ENCODE measurements at regions of chr16 and their contacts with region 1.

Region 1: DNA sequence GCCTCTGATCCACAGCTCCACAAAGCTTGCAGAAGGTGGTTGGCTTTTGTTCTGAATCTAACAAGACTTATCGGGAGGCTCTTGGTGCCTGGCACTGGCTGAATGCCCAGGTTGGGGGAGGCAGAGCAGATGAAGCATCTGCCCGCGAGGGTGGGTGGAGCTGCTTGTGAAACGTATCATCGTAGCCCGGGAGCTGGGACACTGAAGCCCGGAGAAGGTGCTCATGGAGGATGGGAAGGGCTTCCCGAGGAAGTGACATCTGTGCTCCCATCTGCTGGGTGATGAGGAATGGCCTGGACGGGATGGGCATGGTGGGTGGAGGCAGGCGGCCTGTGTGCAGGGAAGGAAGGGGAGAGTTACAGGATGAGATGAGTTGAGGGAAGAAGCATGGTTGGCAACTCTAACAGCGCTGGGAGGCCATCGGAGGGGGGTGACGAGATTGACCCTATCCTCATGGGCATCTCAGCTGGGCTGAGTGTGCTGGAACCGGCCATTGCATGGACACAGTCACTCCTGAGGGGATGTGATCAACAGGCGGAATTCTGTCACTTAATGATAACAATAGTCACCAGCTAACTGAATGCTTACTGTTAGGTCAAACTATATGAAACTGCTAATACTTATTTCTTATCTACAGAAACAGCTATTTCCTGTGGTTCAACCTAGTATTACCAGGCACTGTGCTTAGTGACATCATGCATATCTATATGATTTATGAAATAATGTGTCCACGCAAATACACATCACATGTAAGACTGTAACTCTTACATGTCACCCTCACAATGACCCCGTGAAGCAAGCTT is 102.7 kb downstream of the ABCC6 start:
- DNase-seq: no peak
- H3K4me3 ChIP-seq: no peak overlapping the region
- H3K27ac ChIP-seq: no peak overlapping the region
- H3K4me1 ChIP-seq: no peaks in the 10 kb centered on the region
- H3K27me3 ChIP-seq: no peaks in the 10 kb centered on the region
- CTCF ChIP-seq: no peak

Region 2: DNA sequence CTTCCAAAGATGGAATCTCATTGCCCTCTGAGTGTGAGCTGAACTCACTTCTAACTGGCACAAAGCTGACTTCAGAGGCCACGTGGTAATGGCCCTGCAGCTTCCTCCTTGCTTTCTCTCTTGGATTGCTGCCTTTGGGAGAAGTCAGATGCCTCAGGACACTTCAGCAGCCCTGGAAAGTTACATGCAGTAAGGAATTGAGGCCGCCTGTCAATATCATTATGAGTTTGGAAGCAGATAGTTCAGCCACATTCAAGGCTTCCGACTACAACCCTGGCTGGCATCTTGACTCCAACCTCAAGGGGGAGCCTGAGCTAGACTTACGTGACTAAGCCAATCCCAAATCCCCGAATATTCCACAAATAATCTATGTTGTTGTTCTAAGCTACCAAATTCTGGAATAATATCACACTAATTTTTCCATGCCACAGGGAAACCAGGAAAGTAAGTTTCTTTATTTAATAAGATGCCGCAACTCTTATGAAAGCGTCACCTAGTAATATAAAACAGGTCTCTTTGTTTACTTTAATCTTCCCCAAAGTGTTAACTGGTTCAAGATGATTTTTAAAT is 245.8 kb before region 1 on chr16:
- CTCF ChIA-PET with region 1: no interaction called
- POLR2A ChIA-PET with region 1: no interaction called
- intact Hi-C with region 1: no loop called
- DNase-seq: peak; percentile 39 to 57
- H3K4me3 ChIP-seq: no peak overlapping the region
- H3K27ac ChIP-seq: peak overlapping the region; percentile 27
- H3K4me1 ChIP-seq: peaks cover 24% of the 10 kb centered on the region
- H3K27me3 ChIP-seq: no peaks in the 10 kb centered on the region
- CTCF ChIP-seq: peak; percentile 81

Region 3: GRCh38 chr16:16057102-16057501 is 63.5 kb before region 1 on chr16:
- CTCF ChIA-PET with region 1: no interaction called
- POLR2A ChIA-PET with region 1: interaction called, 11 read pairs
- intact Hi-C with region 1: no loop called
- DNase-seq: no peak
- H3K4me3 ChIP-seq: no peak overlapping the region
- H3K27ac ChIP-seq: no peak overlapping the region
- H3K4me1 ChIP-seq: no peaks in the 10 kb centered on the region
- H3K27me3 ChIP-seq: no peaks in the 10 kb centered on the region
- CTCF ChIP-seq: no peak

Region 4: DNA sequence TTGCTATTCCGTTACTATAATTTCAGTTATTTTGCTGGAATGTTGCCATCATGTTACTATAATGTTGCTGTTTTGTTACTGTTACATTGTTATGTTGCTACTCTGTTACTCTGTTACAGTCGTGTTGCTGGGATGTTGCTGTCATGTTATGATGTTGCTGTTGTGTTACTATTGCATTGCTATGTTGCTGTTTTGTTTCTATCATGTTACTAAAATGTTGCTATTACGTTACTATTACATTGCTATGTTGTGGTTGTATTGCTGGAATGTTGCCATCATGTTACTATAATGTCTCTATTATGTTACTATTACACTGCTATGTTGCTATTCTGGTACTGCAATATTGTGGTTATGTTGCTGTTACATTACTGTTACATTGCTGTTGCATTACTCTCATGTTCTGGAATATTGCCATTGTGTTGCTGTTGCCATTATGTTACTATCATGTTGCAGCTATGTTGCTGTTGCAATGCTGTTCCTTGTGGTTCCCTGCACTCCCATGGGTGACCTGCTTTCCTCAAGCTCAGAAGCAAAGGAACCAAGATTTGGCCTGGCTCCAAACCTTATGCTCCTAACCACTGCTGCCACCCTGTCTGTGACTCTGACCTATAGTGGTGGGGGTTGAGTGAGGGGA is 38.3 kb after region 1 on chr16:
- CTCF ChIA-PET with region 1: no interaction called
- POLR2A ChIA-PET with region 1: no interaction called
- intact Hi-C with region 1: no loop called
- DNase-seq: peak in 1 of 2 experiments; percentile 40
- H3K4me3 ChIP-seq: no peak overlapping the region
- H3K27ac ChIP-seq: no peak overlapping the region
- H3K4me1 ChIP-seq: no peaks in the 10 kb centered on the region
- H3K27me3 ChIP-seq: no peaks in the 10 kb centered on the region
- CTCF ChIP-seq: no peak

Measured in PC-9 (cell line).